ENCODE measurements at regions of chr15 and their contacts with region 1.

Region 1: GRCh38 chr15:31241888-31242522 is 84.6 kb upstream of the KLF13 start:
- DNase-seq: peak; percentile 25
- H3K4me3 Mint-ChIP-seq: no peak overlapping the region
- H3K27ac Mint-ChIP-seq: peak overlapping the region; percentile 24
- H3K4me1 Mint-ChIP-seq: peaks cover 28% of the 10 kb centered on the region
- H3K27me3 Mint-ChIP-seq: no peaks in the 10 kb centered on the region

Region 2: GRCh38 chr15:31228985-31229826 is 12.8 kb before region 1 on chr15:
- CTCF ChIA-PET with region 1: no interaction called
- POLR2A ChIA-PET with region 1: no interaction called
- intact Hi-C with region 1: loop called (anchors 2 kb)
- DNase-seq: no peak
- H3K4me3 Mint-ChIP-seq: no peak overlapping the region
- H3K27ac Mint-ChIP-seq: no peak overlapping the region
- H3K4me1 Mint-ChIP-seq: peaks cover 6% of the 10 kb centered on the region
- H3K27me3 Mint-ChIP-seq: no peaks in the 10 kb centered on the region

Region 3: GRCh38 chr15:31831596-31831995 is 589.6 kb after region 1 on chr15:
- CTCF ChIA-PET with region 1: no interaction called
- POLR2A ChIA-PET with region 1: no interaction called
- intact Hi-C with region 1: no loop called
- DNase-seq: no peak
- H3K4me3 Mint-ChIP-seq: no peak overlapping the region
- H3K27ac Mint-ChIP-seq: no peak overlapping the region
- H3K4me1 Mint-ChIP-seq: no peaks in the 10 kb centered on the region
- H3K27me3 Mint-ChIP-seq: peaks cover 11% of the 10 kb centered on the region

Measured in activated CD4-positive, alpha-beta memory T cell treated with anti-CD3 and anti-CD28 coated beads for 36 hours (primary cell).